AG04450 (cell line): ENCODE measurements at regions of chr11 and their contacts with region 1.

Region 1: DNA sequence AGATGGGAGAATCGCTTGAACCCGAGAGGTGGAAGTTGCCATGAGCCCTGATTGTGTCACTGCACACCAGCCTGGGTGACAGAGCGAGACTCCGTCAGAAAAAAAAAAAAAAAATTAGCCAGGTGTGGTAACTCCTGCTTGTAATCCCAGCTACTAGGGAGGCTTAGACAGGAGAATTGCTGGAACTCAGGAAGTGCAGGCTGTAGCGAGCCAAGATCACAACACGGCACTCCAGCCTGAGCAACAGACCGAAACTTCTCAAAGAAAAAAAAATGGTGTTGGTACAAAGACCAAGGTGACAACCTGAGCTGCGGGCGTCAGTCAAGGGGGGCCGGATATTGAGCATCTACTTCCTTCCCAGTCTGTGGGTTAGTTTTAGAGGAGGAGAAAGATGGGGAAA is 48.4 kb upstream of the HSPA8 start:
- DNase-seq: no peak
- H3K4me3 ChIP-seq: no peak overlapping the region
- H3K27ac ChIP-seq: no peak overlapping the region
- H3K27me3 ChIP-seq: no peaks in the 10 kb centered on the region
- CTCF ChIP-seq: no peak

Region 2: GRCh38 chr11:122769126-122769780 is 341.1 kb before region 1 on chr11:
- CTCF ChIA-PET with region 1: no interaction called
- POLR2A ChIA-PET with region 1: no interaction called
- DNase-seq: no peak
- H3K4me3 ChIP-seq: no peak overlapping the region
- H3K27ac ChIP-seq: no peak overlapping the region
- H3K27me3 ChIP-seq: no peaks in the 10 kb centered on the region
- CTCF ChIP-seq: no peak

Region 3: GRCh38 chr11:123122341-123122740 is 12.0 kb after region 1 on chr11:
- CTCF ChIA-PET with region 1: interaction called, 21 read pairs
- POLR2A ChIA-PET with region 1: no interaction called
- DNase-seq: no peak
- H3K4me3 ChIP-seq: no peak overlapping the region
- H3K27ac ChIP-seq: peak overlapping the region; percentile 75
- H3K27me3 ChIP-seq: no peaks in the 10 kb centered on the region
- CTCF ChIP-seq: no peak